B cell (primary cell): ENCODE measurements at regions of chr3 and their contacts with region 1.

Region 1: DNA sequence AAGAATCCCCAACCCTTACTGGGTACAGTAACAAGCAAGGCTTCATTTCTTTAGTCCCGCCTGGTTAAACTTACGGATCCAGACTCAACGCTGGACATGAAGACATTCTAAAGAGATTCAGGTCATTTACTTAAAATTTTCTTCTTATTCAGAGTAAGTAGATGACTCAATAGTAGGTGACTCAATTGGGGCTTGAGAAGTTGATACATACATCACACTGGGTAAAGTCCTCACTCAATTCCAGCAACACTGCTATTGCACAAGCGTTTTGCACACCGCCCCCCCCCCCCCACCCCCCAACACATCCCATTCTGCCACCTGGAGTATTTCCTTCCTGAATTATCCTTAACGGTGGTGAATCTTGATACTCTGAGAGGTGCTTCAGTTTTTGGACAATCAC is 610.0 kb downstream of the FOXP1 start:
- DNase-seq: no peak
- ATAC-seq: no peak
- H3K4me3 ChIP-seq: no peak overlapping the region
- H3K4me3 Mint-ChIP-seq: no peak overlapping the region
- H3K27ac ChIP-seq: no peak overlapping the region
- H3K27ac Mint-ChIP-seq: peak overlapping the region; percentile 59
- H3K4me1 ChIP-seq: no peaks in the 10 kb centered on the region
- H3K4me1 Mint-ChIP-seq: peaks cover 8% of the 10 kb centered on the region
- H3K27me3 ChIP-seq: no peaks in the 10 kb centered on the region
- H3K27me3 Mint-ChIP-seq: no peaks in the 10 kb centered on the region
- CTCF ChIP-seq: no peak

Region 2: DNA sequence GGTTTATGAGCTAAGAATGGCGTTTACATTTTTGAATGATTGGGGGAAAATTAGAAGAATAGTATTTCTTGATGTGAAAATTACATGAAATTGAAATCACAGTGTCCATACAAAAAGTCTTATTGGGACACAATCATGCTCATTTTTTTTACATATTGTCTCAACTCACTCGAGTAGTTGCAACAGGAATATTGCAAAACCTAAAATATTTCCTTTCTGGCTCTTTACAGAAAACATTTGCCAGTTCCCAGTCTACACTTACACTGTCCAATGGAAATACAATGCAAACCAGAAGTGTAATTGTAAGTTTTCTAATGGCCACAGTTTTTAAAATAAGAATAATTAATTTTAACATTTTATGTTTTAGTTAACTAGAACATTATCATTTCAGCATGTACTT is 836.2 kb before region 1 on chr3:
- CTCF ChIA-PET with region 1: no interaction called
- POLR2A ChIA-PET with region 1: no interaction called
- intact Hi-C with region 1: no loop called
- DNase-seq: no peak
- ATAC-seq: no peak
- H3K4me3 ChIP-seq: no peak overlapping the region
- H3K4me3 Mint-ChIP-seq: no peak overlapping the region
- H3K27ac ChIP-seq: no peak overlapping the region
- H3K27ac Mint-ChIP-seq: no peak overlapping the region
- H3K4me1 ChIP-seq: no peaks in the 10 kb centered on the region
- H3K4me1 Mint-ChIP-seq: no peaks in the 10 kb centered on the region
- H3K27me3 ChIP-seq: no peaks in the 10 kb centered on the region
- H3K27me3 Mint-ChIP-seq: peaks cover 18% of the 10 kb centered on the region
- CTCF ChIP-seq: no peak

Region 3: GRCh38 chr3:70984776-70985482 is 11.4 kb after region 1 on chr3:
- CTCF ChIA-PET with region 1: interaction called, 3 read pairs
- POLR2A ChIA-PET with region 1: no interaction called
- intact Hi-C with region 1: loop called (anchors 1 kb)
- DNase-seq: no peak
- ATAC-seq: no peak
- H3K4me3 ChIP-seq: no peak overlapping the region
- H3K4me3 Mint-ChIP-seq: no peak overlapping the region
- H3K27ac ChIP-seq: no peak overlapping the region
- H3K27ac Mint-ChIP-seq: no peak overlapping the region
- H3K4me1 ChIP-seq: peaks cover 0 to 3% of the 10 kb centered on the region in 2 donors
- H3K4me1 Mint-ChIP-seq: peaks cover 18% of the 10 kb centered on the region
- H3K27me3 ChIP-seq: no peaks in the 10 kb centered on the region
- H3K27me3 Mint-ChIP-seq: no peaks in the 10 kb centered on the region
- CTCF ChIP-seq: no peak